PC-3 (cell line): ENCODE measurements at regions of chr5 and their contacts with region 1.

Region 1: DNA sequence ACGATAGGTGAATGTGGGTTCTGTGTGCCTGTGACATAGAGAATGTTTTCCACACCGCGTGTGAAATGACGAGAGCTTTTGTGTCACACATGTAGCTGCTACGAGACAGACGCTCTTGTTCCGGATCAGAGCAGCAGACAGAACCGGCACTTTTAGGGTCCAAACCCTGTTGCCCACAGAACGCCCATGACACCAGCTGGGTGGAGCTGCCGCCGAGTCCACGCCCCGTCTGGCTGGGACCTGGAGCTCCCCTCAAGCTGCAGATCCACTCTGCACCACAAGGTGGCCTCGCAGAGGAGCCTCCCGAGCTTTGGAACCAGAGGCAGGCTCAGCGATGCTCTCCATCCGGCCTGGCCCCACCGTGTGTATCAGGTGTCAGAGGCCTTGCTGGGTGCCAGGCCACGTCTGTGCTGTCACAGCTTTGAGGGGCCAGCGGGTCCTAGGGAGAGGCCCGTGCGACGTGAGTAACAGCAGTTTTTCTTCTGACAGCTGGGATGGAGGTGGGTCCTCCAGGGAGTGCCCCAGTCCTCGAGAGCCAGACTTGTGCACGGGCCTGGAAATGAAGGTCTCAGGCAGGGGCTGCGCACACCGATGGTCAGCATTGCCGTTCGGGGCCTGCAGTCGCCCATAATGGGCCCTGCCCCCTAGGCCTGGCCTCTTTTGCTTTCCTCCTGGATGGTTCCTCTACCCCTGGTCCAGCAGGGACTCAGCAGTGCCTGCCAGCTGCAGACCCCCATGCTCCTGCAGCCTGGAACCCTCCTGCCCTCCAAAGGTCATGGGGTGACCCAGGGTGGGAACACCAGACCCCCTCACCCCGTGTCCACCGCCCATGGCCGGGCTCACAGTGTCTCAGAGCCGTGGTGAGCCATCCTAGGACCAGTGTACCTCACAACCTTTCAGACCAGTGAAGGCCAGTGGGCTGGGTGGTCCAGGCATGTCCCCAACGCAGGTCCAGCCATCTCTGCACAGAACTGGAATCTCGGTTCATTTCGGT is 2.5 kb upstream of the LRRC14B start:
- DNase-seq: peak; percentile 91
- ATAC-seq: peak; percentile 94
- H3K4me3 ChIP-seq: peak overlapping the region; percentile 51
- H3K27ac ChIP-seq: no peak overlapping the region
- H3K4me1 ChIP-seq: peaks cover 11% of the 10 kb centered on the region
- H3K27me3 ChIP-seq: no peaks in the 10 kb centered on the region
- CTCF ChIP-seq: peak; percentile 87

Region 2: DNA sequence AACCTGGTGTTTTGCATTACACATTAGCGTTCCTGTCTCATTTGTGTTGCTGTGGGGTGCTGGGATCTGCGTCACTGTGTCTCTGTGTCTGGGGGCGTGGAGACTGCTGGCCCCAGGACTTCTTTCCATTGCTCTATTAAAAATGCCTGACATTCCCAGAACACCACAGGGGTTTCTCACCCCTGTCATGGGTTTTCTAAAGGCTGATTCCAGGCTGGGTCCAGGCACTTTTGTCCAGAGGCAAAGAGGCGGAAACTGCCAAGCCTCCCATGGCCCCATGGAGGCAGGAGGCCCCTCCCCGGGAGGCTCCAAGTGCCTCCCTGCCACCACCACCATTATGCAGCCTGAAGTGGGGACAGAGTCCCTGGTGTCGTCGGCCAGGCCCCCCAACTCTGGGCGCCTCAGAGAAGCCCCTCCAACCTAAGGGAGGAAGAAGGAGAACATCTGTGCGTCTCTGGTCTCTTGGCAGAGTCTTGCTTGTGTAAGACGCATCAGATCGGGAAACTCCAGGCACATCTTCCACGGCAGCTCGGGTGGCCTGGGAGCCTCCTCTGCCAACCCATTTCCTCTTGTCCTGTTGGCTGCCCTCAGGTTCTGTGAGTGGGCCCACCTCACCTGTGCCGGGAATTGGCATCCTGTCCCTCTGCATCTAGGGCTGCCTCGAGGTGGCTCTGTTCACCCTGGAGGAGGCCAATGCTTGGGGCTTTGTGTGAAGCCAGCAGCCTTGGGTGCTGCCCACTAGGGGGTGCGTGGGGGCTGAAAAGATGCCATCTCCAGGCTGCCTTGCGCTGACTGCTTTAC is 110.6 kb before region 1 on chr5:
- CTCF ChIA-PET with region 1: no interaction called
- POLR2A ChIA-PET with region 1: no interaction called
- intact Hi-C with region 1: loop called (anchors 1 kb)
- DNase-seq: peak; percentile 69
- ATAC-seq: peak; percentile 92
- H3K4me3 ChIP-seq: no peak overlapping the region
- H3K27ac ChIP-seq: no peak overlapping the region
- H3K4me1 ChIP-seq: no peaks in the 10 kb centered on the region
- H3K27me3 ChIP-seq: no peaks in the 10 kb centered on the region
- CTCF ChIP-seq: peak; percentile 89

Region 3: GRCh38 chr5:298737-299125 is 109.9 kb after region 1 on chr5:
- CTCF ChIA-PET with region 1: no interaction called
- POLR2A ChIA-PET with region 1: no interaction called
- intact Hi-C with region 1: no loop called
- DNase-seq: no peak
- ATAC-seq: no peak
- H3K4me3 ChIP-seq: no peak overlapping the region
- H3K27ac ChIP-seq: no peak overlapping the region
- H3K4me1 ChIP-seq: no peaks in the 10 kb centered on the region
- H3K27me3 ChIP-seq: no peaks in the 10 kb centered on the region
- CTCF ChIP-seq: no peak